Left colon (tissue), 2 donors: ENCODE measurements at regions of chr6 and their contacts with region 1.

Region 1: GRCh38 chr6:72084992-72085569 is 198.7 kb downstream of the RIMS1 start:
- DNase-seq: no peak
- ATAC-seq: no peak

Region 2: DNA sequence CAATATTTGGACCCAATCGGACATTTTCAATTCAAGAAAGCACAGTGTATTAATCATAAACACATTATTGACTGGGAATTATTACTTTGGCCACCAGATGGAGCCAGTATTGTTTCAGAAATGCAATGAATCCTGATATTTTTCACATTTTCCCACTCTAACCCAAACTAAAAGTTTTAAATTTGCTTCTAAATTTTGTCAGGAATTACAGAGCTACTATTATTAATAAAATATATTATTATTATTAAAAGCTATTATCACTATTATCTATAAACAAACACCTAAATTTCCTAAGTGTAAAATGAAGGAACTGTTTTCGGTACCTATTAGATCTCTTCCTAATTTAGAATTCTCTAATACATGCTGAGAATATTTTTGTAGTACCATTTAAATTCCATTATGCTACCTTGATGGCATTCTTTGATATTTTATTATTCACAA is 551.1 kb before region 1 on chr6:
- intact Hi-C with region 1: loop called in 1 of 2 experiments (anchors 10 kb)
- DNase-seq: no peak
- ATAC-seq: no peak